CD14-positive monocyte (primary cell): ENCODE measurements at regions of chr9 and their contacts with region 1.

Region 1: DNA sequence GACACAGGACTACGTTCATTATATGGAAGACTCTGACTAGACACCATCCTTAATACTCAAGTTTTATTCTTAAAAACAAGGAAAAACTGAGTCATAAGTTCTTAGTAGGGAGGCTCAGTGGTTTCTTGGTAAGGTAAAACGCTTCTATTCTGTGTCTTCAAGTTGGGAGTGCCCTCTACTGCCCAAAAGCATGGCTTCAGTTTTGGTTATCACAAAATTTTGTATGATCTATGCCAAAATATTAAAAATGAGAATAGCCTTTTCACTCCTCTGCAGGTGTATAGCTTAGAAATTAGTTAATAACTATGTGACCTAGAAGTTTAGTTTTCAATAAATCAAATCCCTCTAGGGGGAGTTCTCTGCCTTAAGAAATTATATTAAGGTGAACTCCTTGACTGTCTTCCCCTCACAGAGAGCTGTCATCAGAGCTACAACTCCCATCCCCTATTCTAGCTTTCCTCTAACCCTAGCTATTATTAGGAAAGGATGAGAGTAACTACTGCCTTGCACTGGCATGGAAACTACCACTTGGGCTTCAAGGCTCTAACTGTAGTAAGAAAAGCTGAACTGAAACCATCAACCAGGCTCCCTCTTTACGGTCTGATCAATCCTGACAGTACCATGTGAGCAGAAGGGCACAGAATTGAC is 189.7 kb downstream of the GNAQ start:
- DNase-seq: peak in 1 of 3 donors; percentile 28
- H3K4me3 ChIP-seq: no peak overlapping the region
- H3K4me3 Mint-ChIP-seq: no peak overlapping the region
- H3K27ac ChIP-seq: peak overlapping the region in 1 of 2 donors; percentile 63
- H3K27ac Mint-ChIP-seq: peak overlapping the region in 6 of 7 donors; percentile 2 to 79 (median 38)
- H3K4me1 ChIP-seq: peaks cover 9 to 28% of the 10 kb centered on the region in 2 donors
- H3K4me1 Mint-ChIP-seq: peaks cover 36% of the 10 kb centered on the region
- H3K27me3 ChIP-seq: no peaks in the 10 kb centered on the region
- H3K27me3 Mint-ChIP-seq: no peaks in the 10 kb centered on the region
- CTCF ChIP-seq: no peak

Region 2: DNA sequence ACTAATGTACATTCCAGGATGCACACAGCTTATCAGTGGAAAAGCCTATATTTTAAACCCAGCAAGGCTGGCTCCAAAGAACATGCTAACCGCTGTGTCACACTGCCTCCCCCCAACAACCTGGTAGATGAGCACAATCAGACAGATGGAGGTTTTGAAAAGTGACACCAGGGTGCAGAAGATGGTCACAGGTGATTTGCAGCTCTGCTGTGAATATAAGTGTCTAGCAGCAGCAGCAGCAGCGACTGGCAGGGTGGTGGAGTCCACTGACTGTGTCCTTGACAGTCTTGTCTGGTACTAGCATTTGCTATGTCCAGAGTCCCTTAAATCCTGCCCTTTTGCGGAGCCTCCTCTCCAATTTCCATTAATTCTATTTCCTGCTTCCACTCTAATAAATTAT is 202.5 kb before region 1 on chr9:
- intact Hi-C with region 1: no loop called
- DNase-seq: no peak
- H3K4me3 ChIP-seq: no peak overlapping the region
- H3K4me3 Mint-ChIP-seq: no peak overlapping the region
- H3K27ac ChIP-seq: no peak overlapping the region
- H3K27ac Mint-ChIP-seq: no peak overlapping the region
- H3K4me1 ChIP-seq: no peaks in the 10 kb centered on the region
- H3K4me1 Mint-ChIP-seq: no peaks in the 10 kb centered on the region
- H3K27me3 ChIP-seq: peaks cover 3 to 5% of the 10 kb centered on the region in 2 donors
- H3K27me3 Mint-ChIP-seq: peaks cover 4 to 8% (median 7%) of the 10 kb centered on the region in 3 donors
- CTCF ChIP-seq: no peak

Region 3: GRCh38 chr9:77876091-77876490 is 34.2 kb after region 1 on chr9:
- intact Hi-C with region 1: no loop called
- DNase-seq: no peak
- H3K4me3 ChIP-seq: no peak overlapping the region
- H3K4me3 Mint-ChIP-seq: no peak overlapping the region
- H3K27ac ChIP-seq: peak overlapping the region in 1 of 2 donors; percentile 35
- H3K27ac Mint-ChIP-seq: peak overlapping the region in 1 of 7 donors; percentile 26
- H3K4me1 ChIP-seq: peaks cover 0 to 9% of the 10 kb centered on the region in 2 donors
- H3K4me1 Mint-ChIP-seq: peaks cover 18% of the 10 kb centered on the region
- H3K27me3 ChIP-seq: no peaks in the 10 kb centered on the region
- H3K27me3 Mint-ChIP-seq: peaks cover 0 to 2% (median 0%) of the 10 kb centered on the region in 3 donors
- CTCF ChIP-seq: no peak

Region 4: DNA sequence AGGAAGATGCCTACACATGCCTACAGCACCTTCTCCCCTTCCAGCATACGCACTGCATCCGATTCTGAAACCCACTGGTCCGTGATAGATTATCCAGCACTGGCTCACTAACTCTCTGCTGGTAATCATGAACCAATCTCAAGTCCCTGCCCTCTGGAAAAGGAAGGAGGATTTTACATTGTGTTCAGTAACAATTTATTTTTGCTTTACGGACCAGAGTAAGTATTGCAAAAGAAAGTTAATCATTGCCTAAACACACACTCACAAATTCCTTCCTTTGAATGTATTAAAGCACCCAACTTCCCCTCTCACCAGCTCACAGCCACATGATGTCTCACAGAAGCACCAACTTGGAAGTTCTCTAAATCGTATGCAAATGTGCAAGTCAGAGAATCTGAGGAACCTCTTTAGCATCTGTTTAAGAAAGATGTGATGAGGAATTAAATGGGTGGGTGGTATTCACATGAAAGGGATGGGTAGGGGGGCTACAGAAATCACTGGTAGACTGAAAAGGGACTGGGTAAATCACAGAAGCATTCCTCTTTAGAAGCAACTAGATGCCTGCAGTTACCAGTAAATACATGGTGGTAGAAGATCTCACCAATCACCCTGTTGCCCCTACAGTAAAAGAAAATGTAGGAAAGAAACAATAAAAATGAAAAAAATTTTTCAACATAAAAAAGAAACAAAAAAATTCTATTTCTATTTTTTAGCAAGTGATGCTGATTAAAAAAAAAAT is 181.3 kb after region 1 on chr9:
- intact Hi-C with region 1: loop called in 1 of 2 experiments (anchors 10 kb)
- DNase-seq: peak; percentile 90 to 97 (median 97)
- H3K4me3 ChIP-seq: peak overlapping the region; percentile 15 to 72 (median 70)
- H3K4me3 Mint-ChIP-seq: peak overlapping the region; percentile 68 to 86
- H3K27ac ChIP-seq: peak overlapping the region; percentile 22 to 88
- H3K27ac Mint-ChIP-seq: peak overlapping the region; percentile 90 to 97 (median 96)
- H3K4me1 ChIP-seq: peaks cover 72 to 98% of the 10 kb centered on the region in 2 donors
- H3K4me1 Mint-ChIP-seq: peaks cover 84% of the 10 kb centered on the region
- H3K27me3 ChIP-seq: no peaks in the 10 kb centered on the region
- H3K27me3 Mint-ChIP-seq: no peaks in the 10 kb centered on the region
- CTCF ChIP-seq: no peak